GM10248 (cell line): ENCODE measurements at regions of chr17 and their contacts with region 1.

Region 1: DNA sequence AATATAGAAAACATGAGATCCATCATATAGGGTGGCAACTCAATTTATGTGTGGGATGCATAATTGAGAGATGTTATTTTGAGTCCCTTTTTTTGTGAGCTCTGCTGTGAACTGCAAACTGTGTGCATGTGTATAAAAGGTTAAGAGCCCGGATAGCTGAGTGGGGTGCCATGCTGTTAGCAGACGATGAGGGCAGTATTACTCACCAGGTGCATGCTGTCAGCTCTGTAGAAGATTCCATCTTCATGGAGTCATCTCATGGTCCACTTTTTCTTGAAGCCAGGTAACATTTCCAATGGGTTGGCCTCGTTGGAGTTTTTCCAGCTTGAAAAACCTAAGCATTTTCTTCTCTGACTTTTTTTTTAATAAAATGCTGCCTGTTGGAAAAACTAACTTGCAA is 43.0 kb upstream of the RHBDL3 start:
- DNase-seq: no peak
- CTCF ChIP-seq: no peak

Region 2: DNA sequence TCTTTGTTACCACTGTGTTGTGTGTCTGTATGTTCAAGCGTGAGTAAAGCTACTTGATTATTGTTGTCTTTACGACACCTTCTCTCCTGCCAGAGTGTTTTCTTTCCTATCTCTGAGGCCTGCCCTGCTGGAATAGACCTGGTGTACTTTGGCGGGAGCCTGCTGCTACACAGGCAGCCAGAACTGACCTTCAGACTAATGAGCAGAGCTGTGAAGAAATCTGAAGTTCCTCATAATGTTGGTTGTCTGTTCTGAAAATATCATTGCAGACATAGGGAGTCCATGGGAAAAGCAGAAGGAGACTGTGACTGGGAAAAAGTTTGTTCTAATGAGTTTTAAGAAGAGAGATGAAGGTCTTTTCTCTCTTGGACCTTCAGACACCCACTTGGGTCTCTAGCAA is 70.5 kb before region 1 on chr17:
- CTCF ChIA-PET with region 1: no interaction called
- POLR2A ChIA-PET with region 1: no interaction called
- DNase-seq: no peak
- CTCF ChIP-seq: no peak

Region 3: GRCh38 chr17:32206861-32207260 is 15.8 kb before region 1 on chr17:
- CTCF ChIA-PET with region 1: interaction called, 11 read pairs
- POLR2A ChIA-PET with region 1: no interaction called
- DNase-seq: no peak
- CTCF ChIP-seq: no peak